Common myeloid progenitor, CD34-positive (primary cell): ENCODE measurements at regions of chr19 and their contacts with region 1.

Region 1: DNA sequence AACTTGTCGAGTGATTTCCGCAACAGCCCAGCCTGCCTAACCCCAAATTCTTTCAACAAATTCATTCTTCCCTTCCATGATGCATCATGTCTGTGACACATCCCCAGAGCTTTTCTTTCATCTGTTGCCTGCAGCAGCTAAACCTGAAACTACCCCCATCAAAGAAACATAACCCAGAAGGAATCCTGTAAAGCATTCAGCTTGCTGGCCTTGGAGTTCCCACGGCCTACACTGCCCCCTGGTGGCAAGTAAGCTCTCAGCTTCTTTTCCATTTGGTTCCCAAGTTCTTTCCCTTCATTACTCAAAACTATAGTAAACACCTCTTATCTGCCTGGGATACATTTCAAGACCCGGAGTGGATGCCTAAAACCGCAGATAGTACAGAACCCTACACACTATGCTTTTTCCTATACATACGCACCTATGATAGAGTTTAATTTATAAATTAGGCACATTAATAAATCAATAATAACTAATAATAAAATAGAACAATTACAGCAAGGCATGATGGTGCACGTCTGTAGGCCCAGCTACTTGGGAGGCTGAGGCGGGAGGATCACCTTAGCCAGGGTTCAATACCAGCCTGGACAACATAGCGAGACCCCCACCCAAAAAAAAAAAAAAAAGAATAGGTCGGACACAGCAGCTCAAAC is 7.4 kb downstream of the ETHE1 start:
- DNase-seq: peak; percentile 84 to 92 (median 86)
- H3K4me3 ChIP-seq: no peak overlapping the region
- H3K27ac ChIP-seq: no peak overlapping the region
- H3K4me1 ChIP-seq: peaks cover 0 to 20% (median 5%) of the 10 kb centered on the region in 4 experiments
- H3K27me3 ChIP-seq: no peaks in the 10 kb centered on the region

Region 2: DNA sequence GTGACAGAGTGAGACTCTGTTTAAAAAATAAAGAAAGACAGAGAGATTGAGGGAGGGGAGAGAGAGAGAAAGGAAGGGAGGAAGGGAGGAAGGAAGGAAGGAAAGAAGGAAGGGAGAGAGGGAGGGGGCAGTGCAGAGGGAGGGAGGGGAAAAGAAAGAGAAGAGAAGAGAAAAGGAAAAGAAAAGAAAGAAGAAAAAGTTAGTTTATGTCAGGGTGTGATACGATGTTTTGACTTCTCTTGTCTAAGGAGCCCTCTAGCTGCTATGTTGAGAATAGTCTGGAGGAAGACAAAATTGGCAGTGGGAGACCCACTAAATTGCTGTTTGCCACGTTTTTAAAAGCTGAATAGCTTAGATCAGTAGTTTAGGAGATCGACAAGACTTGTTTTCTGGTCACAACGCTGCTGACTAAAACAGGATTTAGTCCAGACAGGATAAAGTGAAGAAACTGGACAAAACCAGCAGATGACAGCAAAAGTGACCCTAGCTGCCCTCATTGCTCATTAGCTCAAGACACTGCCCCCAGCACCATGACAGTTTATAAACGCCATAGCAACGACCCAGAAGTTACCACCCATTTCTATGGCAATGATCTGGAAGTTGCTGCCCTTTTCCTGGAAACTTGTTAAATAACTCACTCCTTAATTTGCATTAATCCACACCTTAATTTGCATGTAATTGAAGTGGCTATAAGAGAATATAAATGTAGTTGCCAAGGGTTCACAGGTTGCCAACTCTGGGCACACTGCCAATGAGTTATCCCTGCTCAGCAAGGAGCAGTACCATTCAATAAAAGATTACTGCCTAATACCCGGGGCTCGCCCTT is 93.8 kb before region 1 on chr19:
- CTCF ChIA-PET with region 1: interaction called, 66 read pairs
- POLR2A ChIA-PET with region 1: no interaction called
- DNase-seq: peak in 2 of 3 donors; percentile 59 to 61
- H3K4me3 ChIP-seq: no peak overlapping the region
- H3K27ac ChIP-seq: no peak overlapping the region
- H3K4me1 ChIP-seq: peaks cover 0 to 3% (median 1%) of the 10 kb centered on the region in 4 experiments
- H3K27me3 ChIP-seq: no peaks in the 10 kb centered on the region

Region 3: DNA sequence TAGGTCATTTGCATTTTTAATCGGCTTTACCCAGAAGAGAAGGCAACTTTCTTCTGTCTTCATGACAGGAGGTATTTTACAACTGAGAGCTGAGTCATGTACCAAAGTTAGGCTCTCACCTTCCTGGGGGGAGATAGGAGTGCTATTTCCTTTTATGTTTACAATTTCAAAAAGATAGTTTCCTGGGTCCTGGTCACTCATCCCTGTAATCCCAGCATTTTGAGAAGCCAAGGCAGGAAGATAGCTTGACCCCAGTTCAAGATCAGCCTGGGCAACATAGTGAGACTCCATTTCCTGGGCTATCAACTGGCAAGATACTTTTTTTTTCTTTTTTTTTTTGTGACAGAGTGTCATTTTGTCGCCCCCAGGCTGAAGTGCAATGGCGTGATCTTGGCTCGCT is 61.8 kb before region 1 on chr19:
- CTCF ChIA-PET with region 1: interaction called, 15 read pairs
- POLR2A ChIA-PET with region 1: no interaction called
- DNase-seq: no peak
- H3K4me3 ChIP-seq: no peak overlapping the region
- H3K27ac ChIP-seq: no peak overlapping the region
- H3K4me1 ChIP-seq: peaks cover 7 to 12% (median 11%) of the 10 kb centered on the region in 4 experiments
- H3K27me3 ChIP-seq: peaks cover 0 to 1% (median 0%) of the 10 kb centered on the region in 5 experiments

Region 4: GRCh38 chr19:43489310-43489709 is 30.3 kb before region 1 on chr19:
- CTCF ChIA-PET with region 1: interaction called, 10 read pairs
- POLR2A ChIA-PET with region 1: no interaction called
- DNase-seq: peak in 2 of 3 donors; percentile 59 to 76
- H3K4me3 ChIP-seq: no peak overlapping the region
- H3K27ac ChIP-seq: no peak overlapping the region
- H3K4me1 ChIP-seq: peaks cover 5 to 32% (median 26%) of the 10 kb centered on the region in 4 experiments
- H3K27me3 ChIP-seq: no peaks in the 10 kb centered on the region

Region 5: DNA sequence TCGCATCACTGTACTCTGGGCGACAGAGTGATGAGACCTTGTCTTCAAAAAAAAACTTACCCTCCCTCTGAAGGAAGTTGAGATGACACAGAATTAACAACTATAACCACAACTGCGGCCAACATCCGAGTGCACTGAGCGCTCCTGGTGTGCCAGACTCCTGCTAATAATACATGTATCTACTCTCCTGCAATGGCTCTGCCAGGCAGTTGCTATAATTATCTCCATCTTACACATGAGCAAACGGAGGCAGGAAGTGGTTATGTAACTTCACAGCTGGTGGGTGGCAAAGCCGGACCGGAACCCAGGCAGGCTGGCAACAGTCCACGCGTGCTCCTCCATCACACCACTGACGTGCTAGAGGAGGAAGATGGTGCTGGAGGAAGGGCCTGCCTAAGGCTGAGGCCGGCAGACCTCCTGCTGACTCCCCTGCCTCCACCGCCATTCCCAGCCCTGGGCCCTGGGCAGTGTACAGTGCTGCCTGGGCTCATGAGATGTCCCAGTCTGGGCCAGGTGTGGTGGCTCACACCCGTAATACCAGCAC is 43.2 kb after region 1 on chr19:
- CTCF ChIA-PET with region 1: no interaction called
- POLR2A ChIA-PET with region 1: no interaction called
- DNase-seq: peak; percentile 97 to 100 (median 99)
- H3K4me3 ChIP-seq: no peak overlapping the region
- H3K27ac ChIP-seq: peak overlapping the region; percentile 72 to 77
- H3K4me1 ChIP-seq: peaks cover 7 to 46% (median 38%) of the 10 kb centered on the region in 4 experiments
- H3K27me3 ChIP-seq: no peaks in the 10 kb centered on the region